Activated CD8-positive, alpha-beta T cell treated with anti-CD3 and anti-CD28 coated beads, Interleukin-2, amount 10 ng/mL, durations not matched to agents 7 days and 5 days (primary cell): ENCODE measurements at regions of chr18 and their contacts with region 1.

Region 1: DNA sequence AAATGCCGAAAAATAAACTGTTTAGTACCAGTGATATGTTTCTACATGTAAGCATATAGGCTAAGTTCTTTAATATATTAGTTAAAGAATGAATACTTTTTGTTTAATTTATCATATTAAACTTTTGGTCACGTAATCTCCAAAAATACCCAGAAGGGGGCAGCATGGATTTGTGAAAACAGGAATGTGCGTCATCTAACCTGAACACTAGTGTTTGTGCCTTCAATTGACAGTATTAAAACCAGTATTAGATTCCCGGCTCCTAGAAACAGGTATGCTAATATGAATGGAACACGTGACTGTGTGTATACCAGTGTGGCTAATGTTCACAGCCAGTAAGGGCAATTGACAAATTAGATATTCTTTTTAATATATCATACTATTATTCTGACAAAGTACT is 51.8 kb downstream of the WDR7 start:
- DNase-seq: peak; percentile 31
- ATAC-seq: no peak
- H3K4me3 Mint-ChIP-seq: no peak overlapping the region
- H3K27ac Mint-ChIP-seq: no peak overlapping the region
- H3K4me1 Mint-ChIP-seq: peaks cover 2% of the 10 kb centered on the region
- H3K27me3 Mint-ChIP-seq: no peaks in the 10 kb centered on the region

Region 2: DNA sequence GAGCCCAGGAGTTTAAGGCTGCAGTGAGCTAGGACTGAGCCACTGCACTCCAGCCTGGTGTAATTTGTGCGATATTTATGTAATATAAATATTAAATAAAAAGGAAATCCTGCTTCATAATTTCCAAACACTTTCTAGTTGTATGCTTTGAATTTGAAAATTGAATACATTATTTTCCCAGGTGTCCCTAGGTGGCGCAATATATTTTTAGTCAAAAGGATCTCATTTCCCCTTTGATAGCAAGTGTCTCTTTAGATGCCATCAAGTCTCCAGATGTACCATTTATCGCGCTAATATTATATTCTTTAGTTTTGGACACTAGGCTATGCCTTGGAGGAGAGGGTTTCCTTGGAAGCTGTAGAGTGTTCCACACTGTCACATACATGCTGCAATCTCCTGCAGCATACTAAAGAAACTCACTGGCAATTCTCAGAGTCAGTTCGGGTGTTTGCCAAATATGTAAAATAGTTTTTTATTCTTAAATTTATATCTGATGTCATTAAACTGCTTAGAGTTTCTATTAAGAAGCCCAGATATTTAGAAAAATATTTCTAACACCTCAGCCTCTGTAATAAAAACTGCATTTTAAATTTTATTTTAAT is 57.4 kb before region 1 on chr18:
- CTCF ChIA-PET with region 1: interaction called, 16 read pairs
- POLR2A ChIA-PET with region 1: no interaction called
- DNase-seq: no peak
- ATAC-seq: no peak
- H3K4me3 Mint-ChIP-seq: no peak overlapping the region
- H3K27ac Mint-ChIP-seq: no peak overlapping the region
- H3K4me1 Mint-ChIP-seq: peaks cover 35% of the 10 kb centered on the region
- H3K27me3 Mint-ChIP-seq: no peaks in the 10 kb centered on the region

Region 3: DNA sequence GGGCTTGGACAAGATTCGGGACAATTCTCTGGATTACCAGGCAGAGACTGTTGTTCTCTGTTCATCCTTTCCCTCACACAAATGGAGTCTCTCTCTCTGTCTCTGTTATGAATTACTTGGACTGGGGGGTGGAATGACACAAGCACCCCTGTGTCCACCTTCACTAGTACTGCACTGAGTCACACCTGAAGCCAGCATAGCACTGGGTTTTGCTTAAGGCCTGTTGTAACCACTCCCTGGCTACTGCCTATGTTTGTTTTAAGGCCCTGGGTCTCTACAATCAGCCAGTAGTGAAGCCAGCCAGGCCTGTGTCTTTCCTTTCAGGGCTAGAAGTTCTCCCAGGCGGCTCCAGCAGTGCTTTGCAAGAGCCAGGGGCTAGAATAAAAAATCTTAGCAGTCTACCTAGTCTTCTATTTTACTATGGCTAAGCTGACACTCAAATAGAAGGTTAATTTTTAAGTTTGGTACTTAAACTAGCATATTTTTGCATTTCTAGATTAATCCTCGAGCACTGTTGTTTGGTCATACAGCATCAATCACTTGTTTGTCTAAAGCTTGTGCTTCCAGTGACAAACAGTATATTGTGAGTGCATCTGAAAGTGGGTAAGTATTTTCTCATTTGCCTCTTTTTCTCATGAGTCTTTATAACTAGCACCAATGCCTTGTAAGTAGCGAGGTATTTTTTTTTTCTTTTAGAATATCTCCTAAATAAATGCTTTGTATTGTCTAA is 23.9 kb before region 1 on chr18:
- CTCF ChIA-PET with region 1: interaction called, 12 read pairs
- POLR2A ChIA-PET with region 1: interaction called, 3 read pairs
- DNase-seq: no peak
- ATAC-seq: no peak
- H3K4me3 Mint-ChIP-seq: no peak overlapping the region
- H3K27ac Mint-ChIP-seq: no peak overlapping the region
- H3K4me1 Mint-ChIP-seq: no peaks in the 10 kb centered on the region
- H3K27me3 Mint-ChIP-seq: no peaks in the 10 kb centered on the region

Region 4: GRCh38 chr18:57004366-57005121 is 301.6 kb after region 1 on chr18:
- CTCF ChIA-PET with region 1: no interaction called
- POLR2A ChIA-PET with region 1: no interaction called
- DNase-seq: no peak
- ATAC-seq: peak; percentile 89
- H3K4me3 Mint-ChIP-seq: no peak overlapping the region
- H3K27ac Mint-ChIP-seq: peak overlapping the region; percentile 63
- H3K4me1 Mint-ChIP-seq: peaks cover 32% of the 10 kb centered on the region
- H3K27me3 Mint-ChIP-seq: no peaks in the 10 kb centered on the region